ENCODE measurements at regions of chr1 and their contacts with region 1.

Region 1: GRCh38 chr1:234599617-234600417 is 10.2 kb downstream of the IRF2BP2 start:
- DNase-seq: peak; percentile 92
- H3K4me3 ChIP-seq: peak overlapping the region; percentile 13 to 56 (median 43)
- H3K27ac ChIP-seq: peak overlapping the region; percentile 98 to 100 (median 99)
- H3K4me1 ChIP-seq: peaks cover 26 to 66% (median 57%) of the 10 kb centered on the region in 4 donors
- H3K27me3 ChIP-seq: no peaks in the 10 kb centered on the region
- CTCF ChIP-seq: peak in 1 of 5 experiments; percentile 24
- EP300 ChIP-seq: peak; percentile 31
- POLR2A ChIP-seq: peak; percentile 81

Region 2: DNA sequence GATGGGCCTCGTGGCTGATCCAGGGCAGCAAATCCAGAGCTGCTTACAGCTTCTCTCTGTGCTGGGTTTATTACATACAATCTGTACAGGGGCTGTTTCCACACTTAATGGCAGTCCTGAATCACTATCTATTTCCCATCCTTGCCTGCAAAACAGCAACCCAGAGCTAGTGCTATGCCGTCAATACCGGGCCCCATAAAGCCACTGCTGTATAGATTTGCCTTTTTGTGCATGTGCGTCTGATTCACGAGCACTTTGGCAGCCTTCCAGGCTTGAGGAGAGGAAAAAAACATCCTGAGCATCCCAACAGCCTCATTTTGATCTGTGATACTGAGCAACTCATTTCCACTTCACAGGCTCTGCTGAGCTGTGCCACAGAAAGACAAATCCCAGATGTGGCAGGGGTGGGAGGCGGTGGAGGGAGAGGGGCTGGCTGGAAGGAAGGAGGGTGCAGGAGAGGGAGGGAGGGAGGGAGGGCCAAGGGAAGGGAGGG is 55.7 kb before region 1 on chr1:
- in situ Hi-C with region 1: loop called in 1 of 4 experiments (anchors 10 kb)
- intact Hi-C with region 1: loop called (anchors 5 kb)
- DNase-seq: peak; percentile 76
- H3K4me3 ChIP-seq: no peak overlapping the region
- H3K27ac ChIP-seq: peak overlapping the region; percentile 72 to 93 (median 83)
- H3K4me1 ChIP-seq: peaks cover 30 to 42% (median 35%) of the 10 kb centered on the region in 4 donors
- H3K27me3 ChIP-seq: no peaks in the 10 kb centered on the region
- CTCF ChIP-seq: no peak
- EP300 ChIP-seq: peak; percentile 71
- POLR2A ChIP-seq: no peak

Region 3: GRCh38 chr1:234670967-234671626 is 71.3 kb after region 1 on chr1:
- in situ Hi-C with region 1: no loop called
- intact Hi-C with region 1: no loop called
- DNase-seq: no peak
- H3K4me3 ChIP-seq: no peak overlapping the region
- H3K27ac ChIP-seq: no peak overlapping the region
- H3K4me1 ChIP-seq: peaks cover 0 to 8% (median 0%) of the 10 kb centered on the region in 4 donors
- H3K27me3 ChIP-seq: no peaks in the 10 kb centered on the region
- CTCF ChIP-seq: no peak
- EP300 ChIP-seq: no peak
- POLR2A ChIP-seq: no peak

Region 4: DNA sequence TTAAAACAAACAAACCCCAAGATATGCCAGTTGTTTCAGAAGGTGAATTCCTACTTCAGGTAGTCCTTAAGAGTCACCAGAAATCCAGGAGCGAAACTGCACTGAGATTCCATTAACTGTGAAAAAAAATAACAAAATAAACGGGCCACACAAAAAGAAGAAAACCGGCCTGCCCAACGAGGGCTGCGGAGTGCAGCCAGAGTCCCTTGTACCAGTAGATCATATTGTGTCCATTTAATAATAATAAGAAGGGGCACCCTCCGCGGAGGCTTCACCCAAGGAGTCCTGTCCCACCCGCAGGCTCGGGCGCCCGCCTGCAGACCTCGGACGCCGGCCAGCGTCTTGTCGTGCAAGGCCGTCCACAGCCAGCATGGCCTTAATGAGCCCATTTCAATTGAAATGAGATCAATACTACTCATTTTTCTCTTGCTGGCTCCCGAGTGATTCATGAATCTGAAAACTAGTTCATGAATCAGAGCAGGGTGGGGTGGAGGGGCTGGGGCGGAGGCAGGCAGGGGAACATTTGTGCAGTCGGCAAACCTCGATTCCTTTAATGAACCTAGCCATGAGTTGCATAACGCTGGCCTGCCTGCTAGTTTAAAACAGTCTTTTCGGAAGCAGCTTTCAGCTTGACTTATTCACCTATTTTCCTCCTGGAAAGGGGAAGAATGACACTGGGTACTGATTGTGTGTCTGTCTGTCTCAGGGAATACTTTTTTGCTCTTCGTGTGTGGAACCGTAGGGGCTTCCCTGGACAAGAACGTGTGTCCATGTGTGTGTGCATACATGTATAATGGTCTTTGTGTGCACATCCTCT is 123.3 kb after region 1 on chr1:
- in situ Hi-C with region 1: loop called in 1 of 4 experiments (anchors 10 kb)
- intact Hi-C with region 1: no loop called
- DNase-seq: peak; percentile 73
- H3K4me3 ChIP-seq: peak overlapping the region in 1 of 4 donors; percentile 14
- H3K27ac ChIP-seq: peak overlapping the region; percentile 97 to 99 (median 98)
- H3K4me1 ChIP-seq: peaks cover 73 to 93% (median 77%) of the 10 kb centered on the region in 4 donors
- H3K27me3 ChIP-seq: no peaks in the 10 kb centered on the region
- CTCF ChIP-seq: no peak
- EP300 ChIP-seq: no peak
- POLR2A ChIP-seq: no peak

Measured in transverse colon (tissue), 4 donors.